ENCODE measurements at regions of chr15 and their contacts with region 1.

Region 1: DNA sequence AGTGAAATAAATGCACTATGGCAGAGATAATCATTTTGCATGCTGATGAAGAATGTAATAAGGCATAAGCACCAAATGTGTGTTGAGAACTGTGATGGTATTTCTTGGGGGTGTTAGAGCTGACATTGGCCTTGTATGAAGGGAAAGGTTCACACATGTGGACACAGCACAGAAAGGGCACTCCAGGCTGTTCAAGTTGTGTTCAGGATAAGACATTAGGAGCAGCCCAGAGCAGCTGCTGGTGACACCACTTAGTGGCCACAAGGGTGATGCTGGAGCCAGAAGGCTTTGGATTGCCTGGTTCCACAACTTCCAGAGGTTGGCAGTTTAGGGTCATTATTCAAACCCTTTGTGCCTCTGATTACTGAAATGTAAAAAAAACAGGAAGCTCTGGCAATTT is 155.4 kb downstream of the GOLGA6L6 start:
- DNase-seq: no peak
- H3K4me3 ChIP-seq: no peak overlapping the region
- H3K27ac ChIP-seq: no peak overlapping the region
- H3K4me1 ChIP-seq: no peaks in the 10 kb centered on the region
- H3K27me3 ChIP-seq: no peaks in the 10 kb centered on the region
- CTCF ChIP-seq: no peak

Region 2: GRCh38 chr15:20361091-20361490 is 25.1 kb before region 1 on chr15:
- intact Hi-C with region 1: loop called (anchors 2 kb)
- DNase-seq: no peak
- H3K4me3 ChIP-seq: no peak overlapping the region
- H3K27ac ChIP-seq: no peak overlapping the region
- H3K4me1 ChIP-seq: no peaks in the 10 kb centered on the region
- H3K27me3 ChIP-seq: no peaks in the 10 kb centered on the region
- CTCF ChIP-seq: no peak

Measured in colonic mucosa (tissue), 4 donors.